ENCODE measurements at regions of chr14 and their contacts with region 1.

Region 1: DNA sequence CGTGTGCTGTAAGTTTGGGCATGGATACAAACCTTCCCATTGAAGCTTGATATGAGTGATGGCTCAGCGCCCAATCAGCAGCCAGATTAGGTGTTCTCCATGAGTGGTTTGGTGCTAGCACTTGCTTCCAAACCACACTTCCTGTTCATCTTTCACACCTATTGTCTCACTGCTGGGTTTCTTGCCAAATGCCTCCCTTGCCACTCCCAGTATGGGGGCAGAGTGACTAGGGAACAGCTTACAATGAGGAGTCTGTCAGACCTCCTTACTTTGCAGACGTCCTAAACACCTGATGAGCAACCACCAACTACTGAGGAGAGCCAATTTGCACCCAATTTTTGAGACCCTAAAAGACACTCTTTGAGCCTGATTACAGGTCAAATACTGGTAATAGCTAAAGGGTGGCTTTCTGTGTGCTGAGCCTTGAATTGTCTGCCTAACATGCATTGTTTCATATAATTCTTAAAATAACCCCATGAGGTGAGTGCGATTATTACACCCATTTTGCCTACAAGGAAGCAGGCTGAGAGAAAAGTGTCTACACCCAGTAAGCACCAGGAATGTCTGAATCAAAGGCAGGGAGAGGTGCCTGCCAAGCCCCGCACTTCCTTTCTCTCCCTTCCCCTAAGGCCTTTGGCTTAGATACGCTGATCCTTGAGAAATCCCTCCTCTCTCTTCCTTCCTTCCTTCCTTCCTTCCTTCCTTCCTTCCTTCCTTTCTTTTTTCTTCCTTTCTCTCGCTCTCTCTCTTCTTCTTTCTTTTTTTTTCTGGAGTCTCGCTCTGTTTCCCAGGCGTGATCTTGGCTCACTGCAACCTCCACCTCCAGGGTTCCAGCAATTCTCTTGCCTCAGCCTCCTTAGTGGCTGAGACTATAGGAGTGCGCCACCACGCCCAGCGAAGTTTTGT is 48.2 kb upstream of the FOS start:
- DNase-seq: peak in 2 of 5 donors; percentile 39 to 76
- ATAC-seq: peak in 3 of 4 donors; percentile 25 to 34 (median 29)
- H3K4me3 ChIP-seq: no peak overlapping the region
- H3K27ac ChIP-seq: peak overlapping the region in 6 of 12 donors; percentile 6 to 62 (median 44)
- H3K4me1 ChIP-seq: peaks cover 0 to 61% (median 10%) of the 10 kb centered on the region in 12 donors
- H3K27me3 ChIP-seq: no peaks in the 10 kb centered on the region
- CTCF ChIP-seq: peak in 6 of 12 donors; percentile 4 to 30 (median 18)
- POLR2A ChIP-seq: no peak

Region 2: DNA sequence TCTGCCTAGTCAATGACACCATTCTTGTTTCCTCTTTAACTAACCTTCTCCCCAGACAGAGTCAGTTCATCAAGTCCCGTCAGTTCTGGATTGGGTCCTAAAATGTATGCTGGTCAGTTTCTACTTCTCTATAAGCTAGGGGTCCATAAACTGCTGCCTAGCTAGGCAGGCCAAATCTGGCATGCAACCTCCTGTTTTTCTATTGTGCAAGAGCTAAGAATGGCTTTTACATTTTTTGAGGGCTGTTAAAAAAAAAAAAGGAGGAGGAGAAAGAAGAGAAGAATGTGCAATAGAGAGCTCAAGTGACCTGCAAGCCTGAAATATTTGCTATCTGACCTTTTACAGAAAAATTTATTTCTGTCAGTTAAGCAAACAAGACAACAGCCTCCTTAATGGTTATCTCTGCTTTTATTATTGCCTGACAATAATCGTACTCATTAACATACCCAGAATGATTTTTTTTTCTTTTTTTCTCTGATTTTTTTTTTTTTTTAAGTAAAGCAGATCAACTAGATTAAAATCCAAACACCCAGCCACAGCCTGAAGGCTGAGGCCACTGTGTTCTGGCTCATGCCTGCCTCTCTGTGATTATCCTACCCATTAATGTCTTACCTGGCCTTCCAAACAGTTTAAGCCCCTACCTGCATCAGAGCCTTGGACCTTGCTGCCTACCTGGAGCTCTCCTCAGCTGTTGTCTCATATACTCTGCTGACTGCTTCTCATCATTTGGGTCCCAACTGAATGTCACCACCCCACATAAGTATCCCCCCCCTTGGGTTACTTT is 47.4 kb before region 1 on chr14:
- intact Hi-C with region 1: loop called in 3 of 10 experiments (anchors 5 to 10 kb)
- DNase-seq: no peak
- ATAC-seq: peak in 3 of 4 donors; percentile 14 to 81 (median 67)
- H3K4me3 ChIP-seq: no peak overlapping the region
- H3K27ac ChIP-seq: peak overlapping the region in 4 of 12 donors; percentile 34 to 56 (median 46)
- H3K4me1 ChIP-seq: peaks cover 0 to 47% (median 0%) of the 10 kb centered on the region in 12 donors
- H3K27me3 ChIP-seq: no peaks in the 10 kb centered on the region
- CTCF ChIP-seq: no peak
- POLR2A ChIP-seq: no peak

Region 3: GRCh38 chr14:75198291-75198933 is 32.0 kb before region 1 on chr14:
- intact Hi-C with region 1: loop called in 1 of 10 experiments (anchors 5 kb)
- DNase-seq: peak; percentile 44 to 81 (median 61)
- ATAC-seq: peak; percentile 82 to 91 (median 88)
- H3K4me3 ChIP-seq: no peak overlapping the region
- H3K27ac ChIP-seq: peak overlapping the region in 1 of 12 donors; percentile 38
- H3K4me1 ChIP-seq: peaks cover 0 to 22% (median 6%) of the 10 kb centered on the region in 12 donors
- H3K27me3 ChIP-seq: no peaks in the 10 kb centered on the region
- CTCF ChIP-seq: no peak
- POLR2A ChIP-seq: no peak

Measured in heart left ventricle (tissue), 16 donors.